Tibial artery (tissue), 4 donors: ENCODE measurements at regions of chr5 and their contacts with region 1.

Region 1: DNA sequence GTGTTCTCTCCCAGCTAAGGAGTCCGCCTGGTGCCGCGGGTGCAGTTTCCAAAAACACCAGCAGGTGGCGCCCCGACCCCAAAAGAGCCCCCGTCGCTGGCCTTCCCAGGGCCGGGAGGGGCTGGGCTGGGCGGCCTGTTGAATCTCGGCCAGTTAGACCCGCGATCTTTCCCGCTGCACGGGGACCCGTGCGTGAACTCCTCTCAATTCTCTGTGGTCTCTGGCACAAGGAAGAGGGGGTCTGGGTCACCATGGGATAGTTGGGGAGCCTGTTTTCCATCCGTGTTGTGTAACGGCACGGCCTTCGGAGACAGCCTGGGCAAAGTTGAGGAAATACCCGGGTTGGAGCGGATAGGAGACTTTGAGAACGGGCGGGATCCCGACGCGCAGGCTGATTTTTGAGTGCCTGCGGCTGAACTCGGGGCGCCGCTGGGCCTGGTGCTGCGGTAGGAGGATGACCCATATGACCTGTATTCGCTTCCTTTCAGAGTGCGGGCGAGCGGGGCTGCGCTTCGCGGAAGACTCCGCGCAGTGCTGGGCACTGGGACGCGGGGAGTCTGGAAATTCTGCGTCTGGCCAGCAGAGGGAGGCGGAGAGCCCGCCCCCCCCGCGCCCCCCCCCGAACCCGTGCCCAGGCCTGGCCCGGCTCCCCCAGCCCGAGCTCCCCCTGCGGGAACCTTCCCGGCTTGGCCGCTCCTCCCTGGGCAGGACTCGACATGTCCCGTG is 7.9 kb upstream of the PSD2 start:
- DNase-seq: peak; percentile 81 to 92
- H3K4me3 ChIP-seq: peak overlapping the region; percentile 52 to 68
- H3K27ac ChIP-seq: peak overlapping the region; percentile 62 to 76
- H3K4me1 ChIP-seq: peaks cover 4 to 9% (median 8%) of the 10 kb centered on the region in 4 donors
- H3K27me3 ChIP-seq: peaks cover 0 to 11% of the 10 kb centered on the region in 2 donors
- CTCF ChIP-seq: peak; percentile 95 to 98

Region 2: GRCh38 chr5:139745800-139746690 is 41.7 kb before region 1 on chr5:
- intact Hi-C with region 1: no loop called
- DNase-seq: peak; percentile 81 to 90
- H3K4me3 ChIP-seq: peak overlapping the region; percentile 51 to 57
- H3K27ac ChIP-seq: peak overlapping the region; percentile 77 to 85
- H3K4me1 ChIP-seq: peaks cover 5 to 44% (median 40%) of the 10 kb centered on the region in 4 donors
- H3K27me3 ChIP-seq: no peaks in the 10 kb centered on the region
- CTCF ChIP-seq: no peak

Region 3: GRCh38 chr5:139844472-139845145 is 56.9 kb after region 1 on chr5:
- intact Hi-C with region 1: loop called (anchors 5 kb)
- DNase-seq: peak; percentile 69 to 81
- H3K4me3 ChIP-seq: no peak overlapping the region
- H3K27ac ChIP-seq: no peak overlapping the region
- H3K4me1 ChIP-seq: peaks cover 0 to 13% (median 8%) of the 10 kb centered on the region in 4 donors
- H3K27me3 ChIP-seq: no peaks in the 10 kb centered on the region
- CTCF ChIP-seq: peak; percentile 57 to 63

Region 4: GRCh38 chr5:139863855-139864558 is 76.3 kb after region 1 on chr5:
- intact Hi-C with region 1: loop called (anchors 1 kb)
- DNase-seq: peak; percentile 70 to 79
- H3K4me3 ChIP-seq: no peak overlapping the region
- H3K27ac ChIP-seq: no peak overlapping the region
- H3K4me1 ChIP-seq: peaks cover 0 to 11% (median 4%) of the 10 kb centered on the region in 4 donors
- H3K27me3 ChIP-seq: no peaks in the 10 kb centered on the region
- CTCF ChIP-seq: peak; percentile 73 to 88

Region 5: DNA sequence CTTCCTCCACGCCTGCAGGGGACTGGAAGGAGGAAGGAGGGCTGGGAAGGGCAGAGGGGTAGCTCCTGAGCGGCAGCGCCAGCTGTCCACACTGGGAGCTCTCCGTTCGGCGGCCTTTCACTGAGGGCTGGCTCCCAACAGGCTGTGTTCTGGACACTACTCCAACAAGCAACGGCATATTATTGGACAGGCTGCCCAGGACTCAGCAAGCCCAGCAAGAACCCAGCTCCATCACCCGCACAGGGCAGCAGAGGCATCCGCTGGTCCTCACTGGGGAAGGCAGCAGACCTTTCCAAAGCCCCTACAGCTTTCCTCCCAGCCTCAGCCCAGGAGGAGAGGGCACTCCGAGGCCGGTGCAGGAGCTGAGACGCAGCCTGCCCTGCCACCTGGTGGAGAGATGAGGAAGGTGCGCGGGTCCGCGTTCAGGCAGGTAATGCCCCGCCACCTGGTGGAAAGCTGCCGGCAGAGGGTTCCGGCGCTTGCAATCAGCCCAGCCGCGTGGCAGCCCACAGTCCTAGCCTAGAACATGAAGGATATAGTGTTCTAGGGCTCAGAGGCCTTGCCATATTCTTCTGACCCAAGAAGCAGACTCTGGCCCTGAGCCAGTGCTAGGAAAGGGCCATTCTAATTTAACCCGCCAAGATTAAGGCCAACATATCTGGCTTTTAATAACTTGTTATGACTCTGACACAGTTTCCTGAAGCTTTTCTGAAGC is 181.0 kb after region 1 on chr5:
- intact Hi-C with region 1: loop called (anchors 2 kb)
- DNase-seq: peak; percentile 70 to 88
- H3K4me3 ChIP-seq: no peak overlapping the region
- H3K27ac ChIP-seq: no peak overlapping the region
- H3K4me1 ChIP-seq: peaks cover 0 to 19% (median 6%) of the 10 kb centered on the region in 4 donors
- H3K27me3 ChIP-seq: peaks cover 0 to 6% of the 10 kb centered on the region in 2 donors
- CTCF ChIP-seq: peak; percentile 98

Region 6: GRCh38 chr5:140042643-140043500 is 255.1 kb after region 1 on chr5 and contains the start of gene NRG2:
- intact Hi-C with region 1: no loop called
- DNase-seq: peak; percentile 48 to 82
- H3K4me3 ChIP-seq: peak within 1 kb of the TSS; percentile 62 to 75
- H3K27ac ChIP-seq: peak within 1 kb of the TSS; percentile 73 to 75
- H3K4me1 ChIP-seq: peaks cover 0 to 43% (median 21%) of the 10 kb centered on the region in 4 donors
- H3K27me3 ChIP-seq: no peaks in the 10 kb centered on the region
- CTCF ChIP-seq: peak; percentile 59 to 69

Region 7: GRCh38 chr5:140953234-140953633 is 1165.5 kb after region 1 on chr5:
- intact Hi-C with region 1: no loop called
- DNase-seq: no peak
- H3K4me3 ChIP-seq: no peak overlapping the region
- H3K27ac ChIP-seq: no peak overlapping the region
- H3K4me1 ChIP-seq: no peaks in the 10 kb centered on the region
- H3K27me3 ChIP-seq: no peaks in the 10 kb centered on the region
- CTCF ChIP-seq: no peak